Endothelial cell of umbilical vein (primary cell): ENCODE measurements at regions of chr5 and their contacts with region 1.

Region 1: DNA sequence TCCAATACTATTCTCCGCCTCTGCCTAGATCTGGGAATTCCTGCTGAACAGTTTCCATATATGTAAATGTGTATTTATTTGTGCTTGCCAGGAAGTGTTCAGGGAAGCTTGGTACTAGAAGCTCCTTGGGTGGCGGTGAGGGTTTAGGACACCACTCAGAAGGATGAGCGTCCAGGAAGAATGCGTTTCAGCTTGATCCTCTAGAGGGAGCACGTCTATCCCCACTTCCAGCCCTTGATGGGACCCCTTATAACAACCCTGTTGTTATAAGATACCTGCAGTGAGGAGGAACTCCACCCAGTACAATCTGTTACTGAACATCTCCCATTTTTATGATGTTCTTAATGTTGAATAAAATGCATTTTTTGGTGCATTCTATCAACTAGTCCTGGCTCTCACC is 88.9 kb downstream of the CYFIP2 start:
- DNase-seq: no peak
- H3K4me3 ChIP-seq: no peak overlapping the region
- H3K27ac ChIP-seq: no peak overlapping the region
- H3K4me1 ChIP-seq: peaks cover 13% of the 10 kb centered on the region
- H3K27me3 ChIP-seq: no peaks in the 10 kb centered on the region
- CTCF ChIP-seq: peak; percentile 17 to 31
- POLR2A ChIP-seq: no peak

Region 2: GRCh38 chr5:157328277-157328912 is 26.4 kb before region 1 on chr5:
- CTCF ChIA-PET with region 1: interaction called, 17 read pairs
- POLR2A ChIA-PET with region 1: interaction called, 3 read pairs
- dilution Hi-C with region 1: no loop called
- intact Hi-C with region 1: no loop called
- DNase-seq: peak; percentile 71
- H3K4me3 ChIP-seq: no peak overlapping the region
- H3K27ac ChIP-seq: no peak overlapping the region
- H3K4me1 ChIP-seq: no peaks in the 10 kb centered on the region
- H3K27me3 ChIP-seq: no peaks in the 10 kb centered on the region
- CTCF ChIP-seq: peak; percentile 91 to 93
- POLR2A ChIP-seq: no peak

Region 3: DNA sequence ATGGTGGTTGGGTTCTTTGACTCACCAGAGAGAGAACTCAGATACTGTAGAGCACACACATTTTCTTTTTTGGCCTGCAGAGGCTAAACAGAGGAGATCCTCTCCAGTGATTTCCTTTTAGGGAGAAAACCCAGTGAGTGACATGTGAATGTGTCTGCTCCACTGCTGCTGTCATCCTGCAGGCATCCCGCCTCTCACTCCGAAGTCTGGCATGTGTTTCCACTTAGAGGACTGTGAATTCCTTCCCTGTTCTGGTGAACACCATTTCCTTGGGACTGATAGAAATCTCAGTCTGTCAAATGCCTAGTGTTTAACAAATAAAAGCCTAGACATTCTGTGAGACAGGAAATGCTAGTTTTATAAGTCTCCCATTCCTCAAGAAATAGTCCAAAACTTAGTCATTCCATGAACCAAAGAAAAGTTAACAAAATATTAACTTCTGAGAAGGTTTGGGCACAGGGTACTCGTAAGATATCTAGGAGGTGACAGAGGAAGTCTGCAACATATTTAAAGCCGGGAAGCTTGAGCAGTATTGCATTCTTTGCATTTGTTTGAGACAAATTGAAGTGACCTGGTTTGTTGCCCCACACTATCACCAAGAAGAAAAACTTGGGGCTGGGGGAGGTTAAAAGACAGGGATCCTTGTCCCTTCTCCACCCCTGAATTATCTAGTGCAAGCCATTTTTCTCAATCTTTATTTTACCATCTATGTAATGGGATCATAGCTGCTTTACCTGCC is 30.3 kb after region 1 on chr5:
- CTCF ChIA-PET with region 1: interaction called, 6 read pairs
- POLR2A ChIA-PET with region 1: no interaction called
- dilution Hi-C with region 1: no loop called
- intact Hi-C with region 1: loop called (anchors 1 kb)
- DNase-seq: peak; percentile 91
- H3K4me3 ChIP-seq: no peak overlapping the region
- H3K27ac ChIP-seq: peak overlapping the region; percentile 88
- H3K4me1 ChIP-seq: peaks cover 57% of the 10 kb centered on the region
- H3K27me3 ChIP-seq: no peaks in the 10 kb centered on the region
- CTCF ChIP-seq: no peak
- POLR2A ChIP-seq: no peak

Region 4: GRCh38 chr5:158869092-158869491 is 1514.3 kb after region 1 on chr5:
- CTCF ChIA-PET with region 1: no interaction called
- POLR2A ChIA-PET with region 1: no interaction called
- dilution Hi-C with region 1: no loop called
- intact Hi-C with region 1: no loop called
- DNase-seq: no peak
- H3K4me3 ChIP-seq: no peak overlapping the region
- H3K27ac ChIP-seq: no peak overlapping the region
- H3K4me1 ChIP-seq: no peaks in the 10 kb centered on the region
- H3K27me3 ChIP-seq: no peaks in the 10 kb centered on the region
- CTCF ChIP-seq: no peak
- POLR2A ChIP-seq: no peak